ENCODE measurements at regions of chr16 and their contacts with region 1.

Region 1: GRCh38 chr16:18932243-18932981 is 6.2 kb upstream of the SMG1 start:
- DNase-seq: no peak
- ATAC-seq: no peak
- H3K4me3 ChIP-seq: no peak overlapping the region
- H3K27ac ChIP-seq: no peak overlapping the region
- H3K4me1 ChIP-seq: peaks cover 2% of the 10 kb centered on the region in 2 experiments; a peak in 2 of 5 replicates
- H3K27me3 ChIP-seq: peaks cover 0 to 5% of the 10 kb centered on the region in 2 experiments; a peak in 2 of 5 replicates
- CTCF ChIP-seq: no peak
- EP300 ChIP-seq: no peak
- POLR2A ChIP-seq: no peak
- RAD21 ChIP-seq: no peak

Region 2: GRCh38 chr16:18945233-18945632 is 12.8 kb after region 1 on chr16:
- CTCF ChIA-PET with region 1: no interaction called
- POLR2A ChIA-PET with region 1: interaction called, 14 read pairs
- in situ Hi-C with region 1: no loop called
- intact Hi-C with region 1: no loop called
- DNase-seq: no peak
- ATAC-seq: no peak
- H3K4me3 ChIP-seq: no peak overlapping the region
- H3K27ac ChIP-seq: no peak overlapping the region
- H3K4me1 ChIP-seq: peaks cover 2 to 3% of the 10 kb centered on the region in 2 experiments; a peak in 2 of 5 replicates
- H3K27me3 ChIP-seq: no peaks in the 10 kb centered on the region
- CTCF ChIP-seq: no peak
- EP300 ChIP-seq: no peak
- POLR2A ChIP-seq: no peak
- RAD21 ChIP-seq: no peak

Region 3: GRCh38 chr16:18983565-18984424 is 51.4 kb after region 1 on chr16 and contains the start of gene TMC7:
- CTCF ChIA-PET with region 1: no interaction called
- POLR2A ChIA-PET with region 1: no interaction called
- in situ Hi-C with region 1: no loop called
- intact Hi-C with region 1: no loop called
- DNase-seq: peak; percentile 87 to 92 (median 90)
- ATAC-seq: peak; percentile 100
- H3K4me3 ChIP-seq: peak within 1 kb of the TSS; percentile 73
- H3K27ac ChIP-seq: 0 out of 3 replicates have a peak within 1 kb of the TSS, but pooled peaks have one; percentile 23
- H3K4me1 ChIP-seq: peaks cover 0 to 7% of the 10 kb centered on the region in 2 experiments; a peak in 3 of 5 replicates
- H3K27me3 ChIP-seq: no peaks in the 10 kb centered on the region; a peak in 3 of 5 replicates
- CTCF ChIP-seq: peak; percentile 89 to 99 (median 99)
- EP300 ChIP-seq: 0 out of 2 replicates have a peak, but pooled peaks have one; percentile 21
- POLR2A ChIP-seq: no peak; the same call in 1 of the 2 replicates
- RAD21 ChIP-seq: peak; percentile 80 to 92
- polyA plus RNA-seq, gene TMC7: 0.08 to 0.32 TPM

Measured in K562 (cell line).